Activated T-helper 1 cell treated with anti-CD3 and anti-CD28 coated beads, Interleukin-12 subunit alpha, Interleukin-12 subunit beta, Interleukin-2, Interleukin-4 antibody, amounts not matched to agents 30 ng/mL and 10 ng/mL and 1 ng/mL, durations not matched to agents 14 hours and 24 hours and 36 hours (primary cell): ENCODE measurements at regions of chr21 and their contacts with region 1.

Region 1: DNA sequence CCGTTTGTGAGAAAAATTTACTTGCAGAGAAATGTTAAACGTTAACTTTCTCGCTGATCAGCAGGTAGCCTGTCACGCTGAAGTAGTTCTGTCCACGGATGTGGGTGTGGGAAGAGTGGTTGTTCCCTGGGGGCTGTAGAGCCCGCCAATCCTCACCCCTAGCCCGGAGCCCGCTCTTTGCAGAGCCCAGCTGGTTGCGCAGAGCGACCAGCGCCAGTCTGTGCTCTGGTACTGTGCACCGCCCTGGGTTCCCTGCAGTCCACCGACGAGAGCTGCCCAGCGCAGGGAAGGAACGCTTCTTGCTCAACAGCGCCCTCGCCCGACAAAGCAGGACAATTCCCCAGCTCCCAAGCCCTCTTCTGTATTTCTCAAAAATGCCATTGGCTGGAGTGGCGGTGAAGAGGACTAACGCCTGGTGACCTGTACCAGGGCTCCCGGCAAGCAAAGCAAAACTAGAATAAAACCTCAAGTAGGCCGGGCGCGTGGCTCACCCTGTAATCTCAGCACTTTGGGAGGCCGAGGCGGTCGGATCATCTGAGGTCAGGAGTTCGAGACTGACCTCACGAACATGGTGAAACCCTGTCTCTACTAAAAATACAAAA is 3.3 kb downstream of the RIPPLY3 start:
- DNase-seq: peak; percentile 69
- H3K4me3 Mint-ChIP-seq: peak overlapping the region; percentile 63
- H3K27ac Mint-ChIP-seq: no peak overlapping the region
- H3K4me1 Mint-ChIP-seq: peaks cover 12% of the 10 kb centered on the region
- H3K27me3 Mint-ChIP-seq: peaks cover 27% of the 10 kb centered on the region

Region 2: DNA sequence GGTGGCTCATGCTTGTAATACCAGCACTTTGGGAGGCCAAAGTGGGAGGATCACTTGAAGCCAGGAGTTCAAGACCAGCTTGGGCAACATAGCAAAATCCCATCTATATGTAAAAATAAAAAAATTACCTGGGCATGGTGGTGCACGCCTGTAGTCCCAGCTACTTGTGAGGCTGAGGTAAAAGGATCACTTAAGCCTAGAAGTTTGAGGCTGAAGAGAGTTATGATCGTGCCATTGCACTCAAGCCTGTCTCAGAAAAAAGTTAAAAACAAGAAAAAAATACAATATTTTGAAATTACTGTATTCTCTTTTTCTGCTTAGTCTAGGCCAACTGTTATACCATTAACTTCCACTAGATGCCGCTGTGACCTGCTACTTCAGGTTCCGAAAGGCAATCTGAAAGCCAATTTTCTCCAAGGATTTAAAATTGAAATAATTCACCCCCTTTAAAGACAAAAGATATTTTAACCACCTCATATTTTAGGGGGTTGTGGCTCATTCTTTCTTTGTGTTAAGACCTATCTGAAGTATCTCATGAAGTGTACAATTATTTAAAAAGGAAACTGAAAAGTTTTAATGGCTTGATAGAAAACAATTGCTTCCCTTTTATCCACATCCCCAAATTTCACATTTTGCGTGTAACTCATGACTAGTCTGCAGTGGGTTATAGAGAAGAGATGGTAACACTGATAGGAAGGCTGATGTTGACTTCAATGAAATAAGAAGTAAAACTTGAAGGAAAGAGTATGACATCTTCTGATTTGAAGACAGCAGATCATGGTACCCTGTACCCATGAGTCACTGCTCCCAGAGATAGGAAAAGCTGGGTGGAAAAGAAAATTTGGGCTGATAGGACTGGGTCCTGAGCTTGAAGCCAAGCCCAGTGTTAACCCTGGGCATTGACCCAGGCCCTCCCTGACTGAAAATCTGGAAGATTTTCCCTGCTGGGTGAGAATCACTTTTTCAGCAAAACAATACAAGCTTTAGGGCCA is 505.5 kb before region 1 on chr21:
- intact Hi-C with region 1: loop called (anchors 10 kb)
- DNase-seq: no peak
- H3K4me3 Mint-ChIP-seq: no peak overlapping the region
- H3K27ac Mint-ChIP-seq: no peak overlapping the region
- H3K4me1 Mint-ChIP-seq: no peaks in the 10 kb centered on the region
- H3K27me3 Mint-ChIP-seq: peaks cover 8% of the 10 kb centered on the region

Region 3: DNA sequence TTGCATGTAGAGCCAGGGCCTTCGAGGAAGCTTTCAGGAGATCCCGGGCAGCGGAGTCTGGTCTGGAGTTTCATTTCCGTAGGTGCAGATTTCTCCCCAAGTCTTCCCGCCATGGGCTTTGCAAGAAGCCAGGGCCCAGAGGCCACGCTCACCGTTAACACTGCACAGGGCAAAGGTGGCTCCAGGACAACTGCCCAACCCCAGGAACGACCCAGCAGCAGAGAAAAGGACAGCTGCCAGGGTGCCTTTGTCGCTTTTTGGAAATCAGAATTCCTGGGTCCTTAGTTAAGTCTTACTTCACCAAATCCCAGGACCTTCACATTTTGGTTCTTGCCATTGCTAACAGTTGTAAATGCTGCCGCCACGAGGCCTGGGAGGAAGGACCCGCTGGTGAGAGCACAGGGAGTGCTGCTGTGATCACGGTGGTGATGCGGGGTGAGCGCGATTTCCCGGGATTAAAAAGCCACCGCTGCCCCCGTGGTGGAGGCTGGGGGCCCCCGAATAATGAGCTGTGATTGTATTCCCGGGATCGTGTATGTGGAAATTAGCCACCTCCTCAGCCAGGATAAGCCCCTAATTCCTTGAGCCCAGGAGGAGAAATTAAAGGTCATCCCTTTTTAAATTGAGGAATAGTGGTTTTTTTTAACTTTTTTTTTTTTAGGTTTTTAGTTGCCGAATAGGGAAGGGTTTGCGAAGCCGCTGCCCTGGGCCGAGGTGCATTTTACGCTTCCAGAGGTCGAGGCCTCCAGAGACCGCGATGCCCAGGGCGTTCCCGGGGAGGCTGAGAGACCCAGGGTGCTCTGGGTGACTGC is 302.7 kb before region 1 on chr21:
- intact Hi-C with region 1: loop called (anchors 5 kb)
- DNase-seq: no peak
- H3K4me3 Mint-ChIP-seq: no peak overlapping the region
- H3K27ac Mint-ChIP-seq: peak overlapping the region; percentile 36
- H3K4me1 Mint-ChIP-seq: no peaks in the 10 kb centered on the region
- H3K27me3 Mint-ChIP-seq: peaks cover 75% of the 10 kb centered on the region

Region 4: GRCh38 chr21:36806103-36806502 is 203.7 kb before region 1 on chr21:
- intact Hi-C with region 1: no loop called
- DNase-seq: no peak
- H3K4me3 Mint-ChIP-seq: no peak overlapping the region
- H3K27ac Mint-ChIP-seq: no peak overlapping the region
- H3K4me1 Mint-ChIP-seq: no peaks in the 10 kb centered on the region
- H3K27me3 Mint-ChIP-seq: no peaks in the 10 kb centered on the region

Region 5: DNA sequence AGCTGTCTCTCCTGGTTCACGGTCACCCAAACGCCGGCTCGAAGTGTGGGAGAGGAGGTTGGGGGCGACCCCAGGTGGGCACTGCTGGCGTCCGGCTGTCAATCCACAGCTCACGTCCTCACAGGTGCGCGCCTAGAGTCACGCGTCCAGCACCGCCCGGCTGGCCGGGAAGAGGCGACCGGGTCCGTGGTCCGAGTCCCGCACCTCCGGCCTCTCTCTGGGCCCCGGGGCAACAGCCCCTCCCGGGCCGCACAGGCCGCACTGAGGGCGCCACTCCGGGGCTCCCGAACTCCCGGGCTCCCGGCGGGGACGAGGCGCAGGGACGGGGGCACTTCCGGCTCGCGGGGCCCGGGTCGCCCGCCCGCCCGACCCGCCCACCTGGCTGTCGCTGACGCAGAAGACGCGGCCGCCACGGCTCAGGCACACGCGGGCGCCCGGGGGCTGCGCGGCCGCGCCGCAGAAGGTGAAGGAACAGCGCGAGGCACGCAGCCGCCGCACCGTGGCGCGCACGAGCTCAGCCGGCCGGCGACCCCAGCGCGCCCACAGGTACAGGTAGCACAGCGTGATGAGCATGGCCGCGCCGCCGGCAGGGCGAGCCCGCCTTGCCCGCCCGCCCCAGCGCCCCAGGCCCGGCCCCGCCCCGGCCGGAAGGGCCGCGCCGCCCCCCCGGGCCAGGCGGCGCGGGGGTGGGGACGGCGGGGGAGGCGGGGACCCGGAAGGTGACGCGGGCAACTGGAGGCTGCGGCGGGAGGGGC is 43.6 kb before region 1 on chr21 and contains the start of gene HLCS:
- intact Hi-C with region 1: loop called (anchors 1 kb)
- DNase-seq: peak; percentile 69
- H3K4me3 Mint-ChIP-seq: peak within 1 kb of the TSS; percentile 93
- H3K27ac Mint-ChIP-seq: peak within 1 kb of the TSS; percentile 90
- H3K4me1 Mint-ChIP-seq: peaks cover 22% of the 10 kb centered on the region
- H3K27me3 Mint-ChIP-seq: no peaks in the 10 kb centered on the region
- total RNA-seq, gene HLCS: 12.6 and 15.8 TPM in 2 replicates

Region 6: DNA sequence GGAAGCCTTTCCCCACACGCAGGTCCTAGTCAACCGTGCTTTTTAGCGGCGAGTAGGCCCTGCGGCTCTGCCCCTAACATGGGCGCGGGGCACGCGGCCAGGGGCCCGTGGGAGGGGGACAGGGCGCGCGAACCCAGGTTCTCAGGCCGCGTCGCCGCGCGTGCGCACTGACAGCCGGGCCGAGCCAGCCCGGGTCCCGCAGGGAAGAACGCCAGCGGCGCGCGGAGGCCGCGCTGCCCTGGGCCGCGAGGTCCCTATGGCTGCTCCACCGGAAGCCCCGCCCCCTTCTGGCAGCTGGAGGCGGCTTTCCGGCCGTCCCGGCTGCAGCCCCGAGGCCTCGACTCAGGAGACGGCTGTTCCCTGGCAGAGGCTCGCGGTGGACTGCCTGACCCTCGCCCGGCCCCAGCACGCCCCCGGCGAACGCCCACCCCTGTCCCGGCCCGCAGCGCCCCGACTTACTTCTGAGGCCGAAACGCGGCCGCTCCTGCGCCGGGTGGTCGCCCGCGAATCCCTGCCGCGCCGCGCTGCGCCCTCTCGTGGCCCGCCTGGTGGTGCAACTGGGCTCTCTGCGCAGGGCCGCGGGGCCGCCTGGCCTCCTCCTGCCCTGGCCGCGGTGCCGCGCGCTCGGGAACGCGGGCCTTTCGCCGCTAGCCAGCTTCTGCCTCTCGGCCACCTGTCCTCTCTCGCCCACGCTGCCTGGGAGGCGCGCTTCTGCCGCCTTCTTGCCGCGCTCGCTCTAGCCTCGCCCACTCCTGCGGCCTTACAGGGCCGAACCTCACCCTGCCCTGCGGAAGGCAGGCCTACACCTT is 19.9 kb before region 1 on chr21:
- intact Hi-C with region 1: loop called (anchors 1 kb)
- DNase-seq: peak; percentile 87
- H3K4me3 Mint-ChIP-seq: peak overlapping the region; percentile 87
- H3K27ac Mint-ChIP-seq: peak overlapping the region; percentile 96
- H3K4me1 Mint-ChIP-seq: peaks cover 37% of the 10 kb centered on the region
- H3K27me3 Mint-ChIP-seq: no peaks in the 10 kb centered on the region